Common myeloid progenitor, CD34-positive (primary cell): ENCODE measurements at regions of chr19 and their contacts with region 1.

Region 1: GRCh38 chr19:1997353-1998144 is 18.0 kb downstream of the BTBD2 start:
- DNase-seq: no peak
- H3K4me3 ChIP-seq: no peak overlapping the region
- H3K27ac ChIP-seq: no peak overlapping the region
- H3K4me1 ChIP-seq: peaks cover 0 to 9% (median 0%) of the 10 kb centered on the region in 4 experiments
- H3K27me3 ChIP-seq: no peaks in the 10 kb centered on the region

Region 2: GRCh38 chr19:1967087-1967608 is 30.4 kb before region 1 on chr19:
- CTCF ChIA-PET with region 1: no interaction called
- POLR2A ChIA-PET with region 1: no interaction called
- DNase-seq: peak in 1 of 3 donors; percentile 12
- H3K4me3 ChIP-seq: no peak overlapping the region
- H3K27ac ChIP-seq: no peak overlapping the region
- H3K4me1 ChIP-seq: peaks cover 0 to 4% (median 0%) of the 10 kb centered on the region in 4 experiments
- H3K27me3 ChIP-seq: no peaks in the 10 kb centered on the region

Region 3: DNA sequence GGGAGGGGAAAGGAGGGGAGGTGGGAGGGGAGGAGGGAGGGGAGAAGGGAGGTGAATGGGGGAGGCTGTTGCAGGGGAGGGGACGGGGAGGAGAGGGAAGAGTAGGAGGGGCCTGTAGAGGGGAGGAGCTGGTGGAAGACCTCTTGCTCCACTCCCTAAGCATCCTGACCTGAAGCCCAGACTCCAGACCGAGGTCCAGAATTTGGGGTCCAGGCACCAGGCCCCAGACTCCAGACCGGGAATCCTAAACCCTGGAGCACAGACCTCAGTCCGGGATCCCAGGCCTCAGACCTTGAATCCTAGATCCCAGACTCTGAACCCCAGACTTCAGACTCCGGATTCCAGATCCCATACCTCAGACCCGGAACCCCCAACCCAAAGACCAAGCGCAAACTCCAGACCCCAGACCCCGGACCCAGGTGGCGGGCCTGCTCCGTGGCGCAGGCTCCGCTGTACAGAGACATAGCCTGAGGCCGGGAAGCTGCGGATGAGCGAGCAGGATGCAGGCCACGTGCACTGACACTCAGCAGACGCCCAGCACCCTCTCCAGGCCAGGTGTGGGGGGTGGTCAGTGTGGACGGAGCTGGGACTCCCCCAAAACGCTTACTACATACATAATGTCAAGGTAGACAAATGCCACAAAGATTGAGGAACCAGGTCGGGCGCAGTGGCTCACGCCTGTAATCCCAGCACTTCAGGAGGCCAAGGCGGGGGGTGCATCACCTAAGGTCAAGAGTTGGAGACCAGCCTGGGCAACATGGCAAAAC is 18.7 kb after region 1 on chr19:
- CTCF ChIA-PET with region 1: no interaction called
- POLR2A ChIA-PET with region 1: interaction called, 11 read pairs
- DNase-seq: peak; percentile 86 to 93 (median 91)
- H3K4me3 ChIP-seq: peak overlapping the region; percentile 19 to 78 (median 59)
- H3K27ac ChIP-seq: peak overlapping the region in 1 of 2 experiments; percentile 25
- H3K4me1 ChIP-seq: peaks cover 0 to 32% (median 19%) of the 10 kb centered on the region in 4 experiments
- H3K27me3 ChIP-seq: no peaks in the 10 kb centered on the region

Region 4: DNA sequence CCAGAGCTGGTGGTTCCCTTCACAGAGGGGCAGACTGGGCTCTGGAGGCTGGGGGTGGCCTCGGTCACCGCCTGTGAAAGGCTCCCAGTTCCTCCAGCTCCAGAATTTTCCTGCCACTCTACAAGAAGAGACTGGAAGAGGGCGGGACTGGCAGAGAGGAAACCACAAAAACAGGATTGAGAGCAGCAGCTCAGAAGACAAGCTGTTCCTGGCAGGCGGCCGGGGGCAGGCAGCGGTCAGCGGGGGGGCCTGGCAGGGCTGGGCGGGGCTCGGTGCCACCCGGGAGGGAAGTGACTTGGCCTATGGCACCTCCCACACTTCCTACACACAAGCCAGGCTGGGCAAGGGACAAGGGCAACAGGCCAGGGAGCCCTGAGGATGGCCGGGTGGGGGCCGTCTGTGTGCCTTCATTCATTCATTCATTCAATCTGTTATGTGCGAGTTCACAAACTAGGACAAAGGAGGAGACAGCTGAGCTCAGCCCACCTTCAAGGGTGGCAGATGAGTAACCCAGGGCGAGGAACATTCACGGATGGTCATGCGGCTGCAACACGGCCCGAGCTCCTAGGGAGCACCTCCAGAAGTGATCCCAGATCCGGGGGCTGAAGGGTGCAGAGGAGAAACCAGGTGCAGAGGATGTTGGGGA is 34.9 kb after region 1 on chr19:
- CTCF ChIA-PET with region 1: no interaction called
- POLR2A ChIA-PET with region 1: no interaction called
- DNase-seq: peak in 2 of 3 donors; percentile 78 to 82
- H3K4me3 ChIP-seq: peak overlapping the region in 5 of 7 experiments; percentile 26 to 73 (median 48)
- H3K27ac ChIP-seq: no peak overlapping the region
- H3K4me1 ChIP-seq: peaks cover 5 to 37% (median 33%) of the 10 kb centered on the region in 4 experiments
- H3K27me3 ChIP-seq: no peaks in the 10 kb centered on the region